Posterior cingulate gyrus (tissue), 11 donors: ENCODE measurements at regions of chr12 and their contacts with region 1.

Region 1: DNA sequence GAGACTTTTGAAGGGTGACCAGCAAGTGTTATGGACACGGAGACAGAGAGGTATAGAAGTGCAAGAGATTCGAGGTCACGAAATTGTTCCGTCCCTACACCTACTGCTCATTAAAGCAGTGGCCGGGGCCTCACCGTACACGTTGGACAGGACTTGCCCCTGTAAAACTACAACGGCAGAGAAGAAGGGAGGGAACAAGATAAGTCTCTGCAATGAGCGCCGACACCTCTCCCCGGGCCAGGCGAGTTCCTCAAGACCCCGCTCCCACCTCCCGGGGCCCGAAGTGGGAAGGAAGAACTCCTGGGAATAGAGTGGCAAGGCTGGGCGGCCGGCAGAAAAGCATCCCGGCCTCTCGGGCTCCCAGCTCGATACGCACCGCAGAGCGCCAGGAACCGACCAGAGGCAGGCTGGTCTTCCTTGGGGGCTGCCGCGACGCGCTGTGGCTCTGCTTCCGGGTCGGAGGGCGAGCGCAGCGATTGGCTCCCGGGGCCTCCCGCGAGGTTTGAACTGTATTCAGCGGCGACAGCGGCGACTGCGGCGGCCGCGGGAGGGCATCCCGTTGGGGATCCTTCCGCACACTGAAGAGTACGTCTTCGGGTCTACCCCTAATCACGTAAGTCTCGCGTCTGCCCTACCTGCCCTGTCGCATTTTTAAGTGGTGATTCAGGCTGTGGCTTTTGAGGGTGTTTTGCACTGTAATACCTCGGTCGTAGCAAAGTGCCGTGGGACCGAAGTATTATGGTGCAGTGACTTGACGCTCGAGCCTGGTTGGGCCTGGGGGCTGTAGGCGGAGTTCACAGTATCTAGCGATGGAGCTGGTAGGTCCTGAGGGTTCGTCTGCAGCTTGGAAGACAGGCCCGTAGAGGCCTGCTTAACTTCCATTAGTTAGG is at the starts of genes NUP37 and PARPBP:
- DNase-seq: peak; percentile 85 to 99 (median 94)

Region 2: GRCh38 chr12:102061560-102062418 is 58.1 kb before region 1 on chr12 and contains the start of gene WASHC3:
- intact Hi-C with region 1: loop called (anchors 2 kb)
- DNase-seq: peak; percentile 94 to 99 (median 97)